Activated CD4-positive, alpha-beta memory T cell treated with anti-CD3 and anti-CD28 coated beads, Interleukin-2, amount 10 ng/mL, durations not matched to agents 7 days and 5 days (primary cell): ENCODE measurements at regions of chr17 and their contacts with region 1.

Region 1: DNA sequence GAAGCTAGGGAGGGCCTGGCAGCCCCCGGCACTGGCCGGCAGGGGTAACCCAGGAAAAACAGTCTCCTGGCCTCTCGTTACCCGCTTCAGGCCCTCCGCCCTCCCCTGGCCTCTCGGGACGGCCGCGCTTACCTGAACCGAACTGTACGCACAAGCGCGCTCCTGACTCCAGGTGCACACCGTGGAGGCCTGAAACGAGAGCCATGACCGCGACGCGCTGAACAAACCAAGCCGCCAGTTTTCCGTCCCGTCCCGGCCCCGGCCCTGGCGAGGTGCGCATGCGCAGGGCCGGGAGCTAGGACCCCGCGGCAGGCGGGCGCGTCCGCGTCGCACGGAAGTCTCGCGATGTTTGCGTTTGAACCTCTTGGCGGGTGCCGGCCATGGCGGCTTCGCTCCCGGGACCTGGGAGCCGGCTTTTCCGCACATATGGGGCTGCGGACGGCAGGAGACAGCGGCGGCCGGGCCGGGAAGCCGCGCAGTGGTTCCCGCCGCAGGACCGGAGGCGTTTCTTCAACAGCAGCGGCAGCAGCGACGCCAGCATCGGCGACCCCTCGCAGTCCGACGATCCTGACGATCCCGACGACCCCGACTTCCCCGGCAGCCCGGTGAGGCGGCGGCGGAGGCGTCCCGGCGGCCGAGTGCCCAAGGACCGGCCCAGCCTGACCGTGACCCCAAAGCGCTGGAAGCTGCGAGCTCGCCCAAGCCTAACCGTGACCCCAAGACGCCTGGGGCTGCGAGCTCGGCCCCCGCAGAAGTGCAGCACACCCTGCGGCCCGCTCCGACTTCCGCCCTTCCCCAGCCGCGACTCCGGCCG is at the start of gene HASPIN:
- DNase-seq: peak; percentile 93
- H3K4me3 Mint-ChIP-seq: peak within 1 kb of the TSS; percentile 79
- H3K27ac Mint-ChIP-seq: peak within 1 kb of the TSS; percentile 68
- H3K4me1 Mint-ChIP-seq: peaks cover 65% of the 10 kb centered on the region
- H3K27me3 Mint-ChIP-seq: no peaks in the 10 kb centered on the region
- total RNA-seq, gene HASPIN: 23.8 to 25.2 TPM

Region 2: DNA sequence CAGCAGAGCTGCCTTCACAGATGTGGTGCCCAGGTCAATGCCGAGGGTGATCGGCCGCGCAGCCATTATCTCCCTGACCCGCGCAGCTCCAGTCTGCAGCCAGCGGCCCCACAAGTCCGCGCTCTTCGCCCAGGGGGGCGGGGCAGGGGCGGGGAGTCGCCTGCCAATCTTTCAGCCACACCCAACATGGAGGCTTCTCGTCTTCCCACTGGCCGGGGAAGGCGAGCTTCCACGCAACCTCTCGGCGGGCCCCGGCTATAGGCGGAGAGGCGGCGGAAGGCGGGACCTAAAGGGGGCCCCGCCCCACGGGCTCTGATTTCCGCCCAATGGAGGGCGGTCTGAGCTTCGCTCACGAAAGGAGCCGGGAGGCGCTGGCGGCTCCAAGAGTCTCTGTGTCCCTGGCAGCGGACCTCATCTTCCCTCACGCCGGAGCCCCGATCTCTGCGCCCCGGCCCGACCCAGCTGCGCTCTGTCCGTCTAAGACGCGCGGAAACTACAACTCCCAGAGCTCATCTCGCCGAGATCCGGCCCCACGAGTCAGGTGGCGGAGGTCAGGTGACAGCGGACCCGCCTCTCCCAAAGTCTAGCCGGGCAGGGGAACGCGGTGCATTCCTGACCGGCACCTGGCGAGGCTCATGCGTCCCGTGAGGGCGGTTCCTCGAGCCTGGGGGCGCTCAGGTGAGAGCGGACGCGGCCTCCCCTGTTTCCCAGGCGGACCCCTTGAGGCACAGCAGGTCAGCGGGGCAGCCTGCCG is 87.4 kb before region 1 on chr17 and contains the starts of genes CTNS and SHPK:
- CTCF ChIA-PET with region 1: interaction called, 10 read pairs
- POLR2A ChIA-PET with region 1: no interaction called
- DNase-seq: peak; percentile 96
- H3K4me3 Mint-ChIP-seq: peak within 1 kb of the TSS; percentile 96
- H3K27ac Mint-ChIP-seq: peak within 1 kb of the TSS; percentile 98
- H3K4me1 Mint-ChIP-seq: peaks cover 49% of the 10 kb centered on the region
- H3K27me3 Mint-ChIP-seq: no peaks in the 10 kb centered on the region
- total RNA-seq, gene CTNS: 24.5 to 26.5 TPM
- total RNA-seq, gene SHPK: 10.4 TPM

Region 3: GRCh38 chr17:3647769-3648555 is 75.8 kb before region 1 on chr17:
- CTCF ChIA-PET with region 1: no interaction called
- POLR2A ChIA-PET with region 1: no interaction called
- DNase-seq: peak; percentile 65
- H3K4me3 Mint-ChIP-seq: no peak overlapping the region
- H3K27ac Mint-ChIP-seq: no peak overlapping the region
- H3K4me1 Mint-ChIP-seq: peaks cover 20% of the 10 kb centered on the region
- H3K27me3 Mint-ChIP-seq: no peaks in the 10 kb centered on the region

Region 4: GRCh38 chr17:3683054-3683511 is 40.7 kb before region 1 on chr17:
- CTCF ChIA-PET with region 1: interaction called, 16 read pairs
- POLR2A ChIA-PET with region 1: interaction called, 3 read pairs
- DNase-seq: peak; percentile 67
- H3K4me3 Mint-ChIP-seq: no peak overlapping the region
- H3K27ac Mint-ChIP-seq: no peak overlapping the region
- H3K4me1 Mint-ChIP-seq: peaks cover 27% of the 10 kb centered on the region
- H3K27me3 Mint-ChIP-seq: no peaks in the 10 kb centered on the region

Region 5: DNA sequence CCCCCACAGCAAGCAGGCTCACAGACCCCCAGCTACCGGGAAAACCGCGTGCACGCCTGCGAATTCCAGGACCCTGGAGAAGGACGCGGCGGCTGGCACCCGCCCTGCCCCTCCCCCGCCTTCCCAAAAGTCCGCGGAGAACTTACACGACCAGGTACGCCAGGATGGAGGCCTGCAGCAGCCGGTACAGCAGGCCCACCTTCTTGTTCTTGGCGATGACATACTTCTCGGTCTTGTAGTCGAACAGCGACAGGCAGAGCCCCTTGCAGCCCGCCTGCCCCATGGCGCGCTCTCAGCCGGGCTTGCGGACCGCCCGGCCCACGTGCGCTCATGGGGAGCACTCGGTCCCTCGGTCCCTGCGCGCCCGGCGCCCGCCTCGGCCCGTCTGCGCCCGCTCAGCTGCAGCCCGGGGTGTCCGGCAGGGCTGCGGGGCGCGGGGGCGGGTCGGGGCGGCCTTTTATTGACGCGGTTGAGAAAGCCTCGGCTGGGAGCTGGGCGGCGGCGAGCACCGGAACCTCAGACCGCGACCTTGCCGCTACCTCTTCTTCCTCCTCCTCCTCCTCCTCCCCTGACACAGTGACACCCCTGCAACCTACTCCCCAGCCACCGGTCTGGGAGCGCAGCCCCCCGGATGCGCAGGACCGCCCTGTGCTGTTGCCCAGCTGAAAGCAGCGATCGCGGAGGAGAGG is 27.9 kb before region 1 on chr17 and contains the start of gene P2RX5:
- CTCF ChIA-PET with region 1: interaction called, 9 read pairs
- POLR2A ChIA-PET with region 1: interaction called, 29 read pairs
- DNase-seq: peak; percentile 61
- H3K4me3 Mint-ChIP-seq: peak within 1 kb of the TSS; percentile 85
- H3K27ac Mint-ChIP-seq: peak within 1 kb of the TSS; percentile 79
- H3K4me1 Mint-ChIP-seq: peaks cover 34% of the 10 kb centered on the region
- H3K27me3 Mint-ChIP-seq: no peaks in the 10 kb centered on the region
- total RNA-seq, gene P2RX5: 30.8 to 31.1 TPM

Region 6: DNA sequence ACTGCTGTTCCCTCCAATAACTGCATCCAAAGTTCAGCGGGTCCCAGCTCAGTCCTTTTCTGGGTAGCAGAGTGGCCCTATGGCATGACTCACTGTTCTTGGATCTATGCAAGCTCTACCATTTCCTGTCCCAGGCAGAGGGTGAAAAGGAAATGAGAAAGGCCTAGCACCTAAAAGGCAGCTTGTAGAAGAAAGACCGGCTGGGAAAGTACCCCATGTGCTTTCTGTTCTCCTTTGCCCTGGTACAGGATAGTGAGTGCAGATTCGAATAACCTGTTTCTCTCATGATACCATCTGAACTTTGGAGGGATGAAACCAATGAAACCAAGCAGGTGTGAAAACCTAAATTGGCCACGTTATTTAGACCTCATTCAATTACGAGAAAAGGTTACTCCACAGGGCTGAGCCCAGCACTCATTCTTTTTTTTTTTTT is 12.8 kb before region 1 on chr17:
- CTCF ChIA-PET with region 1: interaction called, 18 read pairs
- POLR2A ChIA-PET with region 1: interaction called, 41 read pairs
- DNase-seq: peak; percentile 82
- H3K4me3 Mint-ChIP-seq: peak overlapping the region; percentile 68
- H3K27ac Mint-ChIP-seq: peak overlapping the region; percentile 97
- H3K4me1 Mint-ChIP-seq: peaks cover 59% of the 10 kb centered on the region
- H3K27me3 Mint-ChIP-seq: no peaks in the 10 kb centered on the region

Region 7: DNA sequence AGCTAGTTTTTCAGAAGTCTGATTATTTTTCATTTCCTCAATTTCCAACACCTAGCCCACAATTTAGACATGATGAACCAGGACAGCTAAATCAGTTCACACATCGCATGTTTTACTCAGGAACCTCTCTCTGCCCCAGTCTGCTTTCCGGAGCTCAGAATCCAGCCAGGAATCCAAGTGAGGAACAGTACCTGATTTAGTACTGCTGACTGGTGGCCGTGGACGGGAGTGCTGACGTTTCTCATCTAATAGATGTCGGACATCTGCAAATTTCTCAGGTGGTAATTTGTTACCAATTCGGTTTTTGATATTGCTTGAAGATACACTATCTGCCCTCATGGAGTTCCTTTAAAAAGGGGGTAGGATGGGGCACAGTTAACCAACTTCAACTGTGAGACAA is 92.2 kb after region 1 on chr17:
- CTCF ChIA-PET with region 1: no interaction called
- POLR2A ChIA-PET with region 1: no interaction called
- DNase-seq: no peak
- H3K4me3 Mint-ChIP-seq: no peak overlapping the region
- H3K27ac Mint-ChIP-seq: no peak overlapping the region
- H3K4me1 Mint-ChIP-seq: peaks cover 2% of the 10 kb centered on the region
- H3K27me3 Mint-ChIP-seq: no peaks in the 10 kb centered on the region

Region 8: GRCh38 chr17:3827124-3827773 is 103.5 kb after region 1 on chr17:
- CTCF ChIA-PET with region 1: interaction called, 12 read pairs
- POLR2A ChIA-PET with region 1: interaction called, 4 read pairs
- DNase-seq: peak; percentile 76
- H3K4me3 Mint-ChIP-seq: no peak overlapping the region
- H3K27ac Mint-ChIP-seq: peak overlapping the region; percentile 36
- H3K4me1 Mint-ChIP-seq: peaks cover 9% of the 10 kb centered on the region
- H3K27me3 Mint-ChIP-seq: no peaks in the 10 kb centered on the region

Region 9: DNA sequence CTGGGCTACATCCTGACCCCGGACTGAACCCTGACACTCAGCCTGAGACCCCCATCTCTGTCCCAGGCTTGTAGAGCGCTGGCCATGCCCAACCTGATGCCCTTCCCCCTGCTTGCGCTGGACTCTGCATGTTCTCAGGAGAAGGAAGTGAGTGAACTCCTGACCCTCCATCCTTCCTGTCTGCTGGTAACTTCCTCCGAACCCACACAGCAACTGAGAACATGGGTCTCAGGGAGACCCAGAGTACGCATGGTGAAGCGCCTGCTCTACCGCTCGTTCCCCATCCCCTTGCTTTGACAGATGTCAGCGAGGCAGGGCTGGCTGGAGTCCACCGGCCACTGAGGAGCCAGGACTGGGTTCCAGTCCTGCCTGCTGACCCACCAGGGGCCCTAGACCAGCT is 163.0 kb after region 1 on chr17:
- CTCF ChIA-PET with region 1: no interaction called
- POLR2A ChIA-PET with region 1: no interaction called
- DNase-seq: peak; percentile 37
- H3K4me3 Mint-ChIP-seq: peak overlapping the region; percentile 7
- H3K27ac Mint-ChIP-seq: peak overlapping the region; percentile 64
- H3K4me1 Mint-ChIP-seq: peaks cover 27% of the 10 kb centered on the region
- H3K27me3 Mint-ChIP-seq: peaks cover 8% of the 10 kb centered on the region